ENCODE measurements at regions of chr20 and their contacts with region 1.

Region 1: DNA sequence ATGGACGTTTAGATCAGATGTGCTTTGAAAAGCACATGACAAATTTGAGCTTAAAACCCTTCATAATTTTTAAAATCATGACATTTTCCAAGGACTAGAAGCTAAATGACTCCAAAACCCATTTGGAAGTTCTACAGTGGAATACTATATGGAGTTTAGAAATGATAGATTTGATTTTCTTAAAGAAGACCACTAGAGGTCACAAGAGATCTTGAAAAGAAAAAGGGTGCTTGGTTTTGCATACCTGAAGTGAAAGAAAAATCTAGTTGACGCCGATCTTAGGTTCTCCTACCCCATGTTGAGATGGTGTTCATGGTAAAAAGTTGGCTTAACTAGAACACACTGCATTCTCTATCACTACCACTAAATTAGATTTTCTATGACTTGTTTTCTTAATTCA is 31.5 kb downstream of the CFAP61 start:
- DNase-seq: no peak
- H3K4me3 Mint-ChIP-seq: no peak overlapping the region
- H3K27ac Mint-ChIP-seq: no peak overlapping the region
- H3K4me1 Mint-ChIP-seq: no peaks in the 10 kb centered on the region
- H3K27me3 Mint-ChIP-seq: peaks cover 11% of the 10 kb centered on the region

Region 2: GRCh38 chr20:19802492-19803158 is 281.2 kb before region 1 on chr20:
- CTCF ChIA-PET with region 1: no interaction called
- POLR2A ChIA-PET with region 1: no interaction called
- intact Hi-C with region 1: no loop called
- DNase-seq: no peak
- H3K4me3 Mint-ChIP-seq: no peak overlapping the region
- H3K27ac Mint-ChIP-seq: no peak overlapping the region
- H3K4me1 Mint-ChIP-seq: no peaks in the 10 kb centered on the region
- H3K27me3 Mint-ChIP-seq: no peaks in the 10 kb centered on the region

Region 3: DNA sequence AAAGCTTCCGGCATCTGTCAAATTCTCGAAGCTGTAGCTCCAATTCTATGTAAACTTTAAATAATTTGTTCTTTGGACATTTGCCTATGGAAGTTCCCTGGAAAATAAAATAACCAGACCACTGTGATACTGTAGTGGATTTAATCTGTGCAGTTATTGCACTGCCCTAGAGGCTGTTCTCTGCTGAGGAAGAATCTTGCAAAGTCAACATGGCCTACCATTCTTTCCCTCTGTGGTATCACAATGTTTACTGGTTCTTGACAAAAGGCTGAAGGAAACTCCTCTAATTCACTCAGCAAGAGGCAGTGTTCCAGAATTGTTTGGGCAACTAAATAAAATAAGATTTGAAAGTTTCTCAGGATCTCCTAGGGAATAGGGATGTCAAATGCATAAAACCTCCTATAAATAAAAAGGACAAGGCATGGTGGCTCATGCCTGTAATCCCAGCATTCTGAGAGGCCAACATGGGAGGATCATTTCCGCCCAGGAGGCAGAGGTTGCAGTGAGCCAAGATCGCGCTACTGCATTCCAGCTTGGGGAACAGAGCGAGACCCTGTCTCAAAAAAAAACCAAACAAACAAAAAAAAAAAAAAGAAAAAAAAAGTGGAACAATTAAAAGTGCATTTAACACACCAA is 43.9 kb before region 1 on chr20:
- CTCF ChIA-PET with region 1: no interaction called
- POLR2A ChIA-PET with region 1: no interaction called
- intact Hi-C with region 1: no loop called
- DNase-seq: no peak
- H3K4me3 Mint-ChIP-seq: no peak overlapping the region
- H3K27ac Mint-ChIP-seq: no peak overlapping the region
- H3K4me1 Mint-ChIP-seq: no peaks in the 10 kb centered on the region
- H3K27me3 Mint-ChIP-seq: no peaks in the 10 kb centered on the region

Region 4: DNA sequence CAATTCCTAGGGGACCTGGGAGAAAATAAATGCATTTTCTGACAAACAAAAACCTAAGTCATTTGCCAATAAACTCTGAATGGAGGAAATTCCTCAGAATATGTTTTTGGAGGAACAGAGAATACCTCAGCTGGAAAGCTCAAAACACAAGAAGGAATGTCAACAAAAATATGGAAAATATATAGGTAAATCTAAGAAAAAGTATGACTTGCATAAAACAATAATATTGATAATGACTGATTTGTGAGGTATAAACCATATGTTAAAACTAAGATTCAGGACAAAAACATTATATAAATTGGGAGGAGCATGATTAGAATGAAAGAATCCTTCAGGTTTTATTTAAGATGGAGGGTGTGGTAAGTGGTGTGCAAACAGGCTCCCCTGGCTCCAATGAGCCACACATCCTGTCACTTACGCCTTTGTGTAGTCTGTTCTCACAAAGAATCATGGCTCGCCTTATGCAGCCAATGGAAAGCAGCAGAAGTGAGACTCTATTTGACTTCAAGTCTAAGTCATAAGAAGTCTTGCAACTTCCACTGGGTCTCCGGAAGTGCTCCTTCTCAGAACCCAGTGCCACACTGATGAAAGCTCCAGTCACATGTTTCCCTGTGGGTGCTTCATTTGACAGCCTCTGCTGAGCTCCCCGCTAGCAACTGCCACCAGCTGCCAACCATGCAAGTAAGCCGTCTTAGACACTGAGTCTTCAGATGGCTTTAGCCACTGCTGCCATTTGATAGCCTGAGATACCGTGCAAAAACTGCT is 23.4 kb before region 1 on chr20:
- CTCF ChIA-PET with region 1: no interaction called
- POLR2A ChIA-PET with region 1: no interaction called
- intact Hi-C with region 1: no loop called
- DNase-seq: no peak
- H3K4me3 Mint-ChIP-seq: no peak overlapping the region
- H3K27ac Mint-ChIP-seq: no peak overlapping the region
- H3K4me1 Mint-ChIP-seq: no peaks in the 10 kb centered on the region
- H3K27me3 Mint-ChIP-seq: peaks cover 18% of the 10 kb centered on the region

Region 5: DNA sequence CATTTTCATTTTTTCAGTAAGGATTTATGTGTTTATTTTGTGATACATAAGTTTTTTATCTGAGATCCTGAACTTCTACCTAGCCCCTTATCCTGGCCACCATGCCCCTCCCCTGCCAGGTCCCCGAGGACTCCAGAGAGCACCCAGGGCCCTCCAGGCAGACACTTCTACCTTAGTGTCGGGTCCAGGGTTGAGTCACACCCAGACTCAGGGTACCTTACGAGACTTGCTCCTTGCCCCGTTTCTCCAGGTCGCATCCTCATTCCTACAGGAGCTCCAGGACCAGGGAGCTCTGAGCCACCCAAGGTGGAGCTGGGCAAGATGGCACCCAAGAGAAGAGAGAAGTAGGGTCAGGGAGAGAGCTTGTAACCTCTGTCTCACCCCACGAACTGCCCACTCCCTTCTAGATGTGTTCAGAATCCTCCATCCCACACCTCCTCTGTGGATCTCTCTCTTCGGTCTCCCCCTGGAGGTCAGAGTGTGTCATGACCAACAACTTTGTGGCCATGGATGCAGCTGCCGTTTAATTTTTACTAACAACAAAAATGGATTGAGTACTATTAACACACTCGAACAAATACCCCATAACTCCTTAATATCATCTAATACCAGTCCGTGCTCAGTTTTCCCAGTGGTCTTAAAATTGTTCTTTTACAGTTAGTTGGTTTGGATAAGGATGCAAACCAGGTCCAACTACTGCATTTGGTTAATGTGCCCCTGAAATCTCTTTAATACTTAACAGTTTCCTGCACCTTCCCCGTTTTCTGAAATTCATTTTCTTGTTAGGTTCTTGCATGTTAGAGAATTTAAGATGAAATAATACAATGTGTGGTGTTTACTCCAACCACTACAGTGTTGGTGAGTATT is 153.5 kb after region 1 on chr20:
- CTCF ChIA-PET with region 1: interaction called, 21 read pairs
- POLR2A ChIA-PET with region 1: no interaction called
- intact Hi-C with region 1: no loop called
- DNase-seq: peak; percentile 43
- H3K4me3 Mint-ChIP-seq: no peak overlapping the region
- H3K27ac Mint-ChIP-seq: no peak overlapping the region
- H3K4me1 Mint-ChIP-seq: no peaks in the 10 kb centered on the region
- H3K27me3 Mint-ChIP-seq: peaks cover 3% of the 10 kb centered on the region